GM12878 (cell line): ENCODE measurements at regions of chr14 and their contacts with region 1.

Region 1: DNA sequence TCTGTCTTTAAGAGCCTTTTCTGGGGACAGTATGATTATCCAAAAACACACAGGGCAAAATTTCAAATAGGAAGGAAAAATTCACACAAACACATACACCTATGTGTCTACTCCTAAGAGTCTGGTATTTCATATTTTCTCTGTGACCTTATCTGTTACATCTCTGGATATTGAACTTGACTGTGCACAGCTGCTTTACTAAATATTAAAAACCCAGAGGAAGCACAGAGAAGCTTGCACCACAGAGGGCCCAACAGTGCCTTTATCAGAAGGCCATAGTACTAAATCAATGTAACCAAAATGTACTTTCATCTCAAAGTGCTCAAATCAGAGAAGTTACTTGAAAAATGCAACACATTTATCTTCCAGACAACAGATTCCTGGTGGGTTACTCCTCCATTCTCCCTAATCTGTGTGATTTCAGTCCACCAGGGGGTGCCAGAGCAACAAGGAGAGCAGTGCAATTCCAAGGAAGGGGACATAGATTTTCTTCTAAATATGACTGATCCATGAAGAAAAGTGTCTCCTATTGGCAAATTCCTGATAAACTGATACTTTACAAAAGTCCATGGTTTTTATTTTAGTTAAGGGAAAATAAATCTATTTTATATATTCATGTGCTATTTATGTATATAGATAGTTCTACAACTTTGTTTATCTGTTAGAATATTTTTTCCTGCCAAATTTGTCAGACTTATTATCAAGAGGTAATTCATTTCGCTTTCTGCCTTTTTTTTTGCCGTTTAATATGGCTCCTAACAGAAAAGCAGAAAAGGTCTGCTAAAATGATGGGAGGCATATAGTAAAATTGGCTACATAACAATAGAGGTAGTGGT is 617.6 kb downstream of the LRFN5 start:
- DNase-seq: peak; percentile 5
- ATAC-seq: peak; percentile 47
- H3K4me3 ChIP-seq: no peak overlapping the region
- H3K27ac ChIP-seq: no peak overlapping the region
- H3K4me1 ChIP-seq: peaks cover 15% of the 10 kb centered on the region; the same call in 1 of the 2 replicates
- H3K27me3 ChIP-seq: no peaks in the 10 kb centered on the region
- CTCF ChIP-seq: peak; percentile 65 to 73 (median 66)
- EP300 ChIP-seq: no peak
- POLR2A ChIP-seq: no peak
- RAD21 ChIP-seq: peak; percentile 74

Region 2: DNA sequence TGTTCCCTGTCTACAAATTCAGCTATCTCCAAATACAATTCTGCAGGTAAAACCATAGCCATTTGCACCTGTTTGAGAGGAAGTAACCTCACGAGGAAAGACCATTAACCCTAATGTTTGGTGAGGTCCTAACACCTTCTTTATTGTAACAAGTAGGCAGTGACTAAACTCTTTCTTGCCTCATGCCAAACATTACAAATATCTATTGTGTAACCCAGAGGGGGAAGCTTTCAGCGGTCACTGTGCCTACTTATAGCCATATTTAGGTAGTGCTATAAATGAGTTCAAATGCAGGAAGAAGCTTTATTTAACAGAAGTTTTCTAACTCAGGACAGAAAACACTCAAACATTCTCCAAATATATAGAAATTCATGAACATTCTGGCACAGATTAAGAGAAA is 364.9 kb before region 1 on chr14:
- CTCF ChIA-PET with region 1: no interaction called
- POLR2A ChIA-PET with region 1: no interaction called
- RAD21 ChIA-PET with region 1: no interaction called
- SMC1A ChIA-PET with region 1: no interaction called
- in situ Hi-C with region 1: no loop called
- intact Hi-C with region 1: no loop called
- DNase-seq: no peak
- ATAC-seq: no peak
- H3K4me3 ChIP-seq: no peak overlapping the region
- H3K27ac ChIP-seq: no peak overlapping the region
- H3K4me1 ChIP-seq: no peaks in the 10 kb centered on the region
- H3K27me3 ChIP-seq: no peaks in the 10 kb centered on the region
- CTCF ChIP-seq: no peak
- EP300 ChIP-seq: no peak
- POLR2A ChIP-seq: no peak
- RAD21 ChIP-seq: no peak

Region 3: GRCh38 chr14:41925409-41925808 is 298.9 kb before region 1 on chr14:
- CTCF ChIA-PET with region 1: interaction called, 9 read pairs
- POLR2A ChIA-PET with region 1: no interaction called
- RAD21 ChIA-PET with region 1: interaction called, 5 read pairs
- SMC1A ChIA-PET with region 1: interaction called, 3 read pairs
- in situ Hi-C with region 1: no loop called
- intact Hi-C with region 1: loop called (anchors 5 kb)
- DNase-seq: no peak
- ATAC-seq: peak; percentile 26; the same call in 1 of the 3 replicates
- H3K4me3 ChIP-seq: no peak overlapping the region
- H3K27ac ChIP-seq: no peak overlapping the region
- H3K4me1 ChIP-seq: no peaks in the 10 kb centered on the region
- H3K27me3 ChIP-seq: no peaks in the 10 kb centered on the region
- CTCF ChIP-seq: peak in 1 of 3 experiments; percentile 36; a peak in 2 of 6 replicates
- EP300 ChIP-seq: no peak
- POLR2A ChIP-seq: no peak
- RAD21 ChIP-seq: 0 out of 2 replicates have a peak, but pooled peaks have one; percentile 12

Region 4: GRCh38 chr14:42110166-42110723 is 114.0 kb before region 1 on chr14:
- CTCF ChIA-PET with region 1: no interaction called
- POLR2A ChIA-PET with region 1: no interaction called
- RAD21 ChIA-PET with region 1: no interaction called
- SMC1A ChIA-PET with region 1: interaction called, 4 read pairs
- in situ Hi-C with region 1: no loop called
- intact Hi-C with region 1: loop called (anchors 2 kb)
- DNase-seq: no peak
- ATAC-seq: peak; percentile 67
- H3K4me3 ChIP-seq: no peak overlapping the region
- H3K27ac ChIP-seq: no peak overlapping the region
- H3K4me1 ChIP-seq: no peaks in the 10 kb centered on the region
- H3K27me3 ChIP-seq: no peaks in the 10 kb centered on the region
- CTCF ChIP-seq: peak; percentile 36 to 50 (median 49)
- EP300 ChIP-seq: no peak
- POLR2A ChIP-seq: no peak
- RAD21 ChIP-seq: peak; percentile 55

Region 5: GRCh38 chr14:42200947-42201346 is 23.3 kb before region 1 on chr14:
- CTCF ChIA-PET with region 1: no interaction called
- POLR2A ChIA-PET with region 1: no interaction called
- RAD21 ChIA-PET with region 1: no interaction called
- SMC1A ChIA-PET with region 1: no interaction called
- in situ Hi-C with region 1: no loop called
- intact Hi-C with region 1: no loop called
- DNase-seq: no peak
- ATAC-seq: peak; percentile 47; the same call in 2 of the 3 replicates
- H3K4me3 ChIP-seq: no peak overlapping the region
- H3K27ac ChIP-seq: no peak overlapping the region
- H3K4me1 ChIP-seq: no peaks in the 10 kb centered on the region
- H3K27me3 ChIP-seq: no peaks in the 10 kb centered on the region
- CTCF ChIP-seq: no peak
- EP300 ChIP-seq: no peak
- POLR2A ChIP-seq: no peak
- RAD21 ChIP-seq: no peak

Region 6: GRCh38 chr14:42429009-42429800 is 204.9 kb after region 1 on chr14:
- CTCF ChIA-PET with region 1: no interaction called
- POLR2A ChIA-PET with region 1: no interaction called
- RAD21 ChIA-PET with region 1: no interaction called
- SMC1A ChIA-PET with region 1: interaction called, 3 read pairs
- in situ Hi-C with region 1: no loop called
- intact Hi-C with region 1: loop called (anchors 5 kb)
- DNase-seq: peak; percentile 59
- ATAC-seq: peak; percentile 97
- H3K4me3 ChIP-seq: no peak overlapping the region
- H3K27ac ChIP-seq: no peak overlapping the region
- H3K4me1 ChIP-seq: no peaks in the 10 kb centered on the region
- H3K27me3 ChIP-seq: no peaks in the 10 kb centered on the region
- CTCF ChIP-seq: no peak
- EP300 ChIP-seq: peak; percentile 67 to 77; a peak in 3 of 4 replicates
- POLR2A ChIP-seq: no peak
- RAD21 ChIP-seq: no peak